Dorsolateral prefrontal cortex (tissue), 120 donors: ENCODE measurements at regions of chr3 and their contacts with region 1.

Region 1: DNA sequence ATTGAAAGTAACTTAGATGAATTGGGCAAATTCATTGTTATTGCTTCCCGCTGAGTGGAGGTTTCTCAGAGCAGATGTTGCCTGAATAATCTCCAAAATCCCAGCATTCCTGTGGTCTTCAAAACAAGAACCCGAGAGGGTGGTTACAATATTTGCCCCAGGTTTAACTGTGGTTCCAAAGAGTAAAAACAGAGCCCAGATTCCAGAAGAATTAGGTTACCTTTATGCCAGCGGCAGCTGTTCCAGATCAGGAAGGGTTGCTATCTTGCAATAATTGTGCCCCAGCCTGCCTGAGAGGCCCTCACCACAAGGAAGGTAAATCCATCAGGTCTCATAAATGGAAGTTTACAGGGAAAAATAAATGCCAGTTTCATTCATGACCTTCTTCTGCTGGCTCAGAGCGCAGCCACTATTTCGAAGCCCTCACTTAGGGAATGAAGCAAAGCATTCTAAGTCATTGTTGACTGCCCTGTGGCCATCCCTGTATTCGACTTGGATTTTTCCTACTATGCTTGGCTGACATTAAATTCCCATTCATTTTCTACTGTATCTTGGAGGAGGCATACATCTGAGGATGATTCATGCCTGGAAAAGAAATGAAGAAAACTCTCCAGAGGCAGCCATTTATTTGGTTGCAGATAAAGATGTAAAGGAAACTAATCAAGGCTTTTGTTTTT is 54.6 kb downstream of the SSUH2 start:
- DNase-seq: no peak
- H3K4me3 ChIP-seq: no peak overlapping the region
- H3K27ac ChIP-seq: no peak overlapping the region
- H3K27me3 ChIP-seq: no peaks in the 10 kb centered on the region
- CTCF ChIP-seq: no peak

Region 2: GRCh38 chr3:8529181-8529637 is 60.8 kb before region 1 on chr3:
- intact Hi-C with region 1: loop called in 1 of 2 experiments (anchors 5 kb)
- DNase-seq: peak in 1 of 10 donors; percentile 50
- H3K4me3 ChIP-seq: peak overlapping the region in 5 of 59 donors; percentile 3 to 15 (median 7)
- H3K27ac ChIP-seq: peak overlapping the region in 43 of 59 donors; percentile 4 to 76 (median 45)
- H3K27me3 ChIP-seq: no peaks in the 10 kb centered on the region
- CTCF ChIP-seq: no peak